ENCODE measurements at regions of chrX and their contacts with region 1.

Region 1: GRCh38 chrX:124010157-124010556 is 48.7 kb downstream of the STAG2 start:
- DNase-seq: no peak
- ATAC-seq: no peak
- H3K4me3 ChIP-seq: no peak overlapping the region
- H3K4me3 Mint-ChIP-seq: peak overlapping the region in 7 of 10 donors; percentile 0 to 69 (median 52)
- H3K27ac ChIP-seq: no peak overlapping the region
- H3K27ac Mint-ChIP-seq: peak overlapping the region in 6 of 9 donors; percentile 30 to 78 (median 66)
- H3K4me1 ChIP-seq: peaks cover 13 to 31% of the 10 kb centered on the region in 2 donors
- H3K4me1 Mint-ChIP-seq: peaks cover 27 to 85% (median 70%) of the 10 kb centered on the region in 7 donors
- H3K27me3 ChIP-seq: no peaks in the 10 kb centered on the region
- H3K27me3 Mint-ChIP-seq: no peaks in the 10 kb centered on the region

Region 2: GRCh38 chrX:123993904-123994635 is 16.1 kb before region 1 on chrX:
- CTCF ChIA-PET with region 1: no interaction called
- POLR2A ChIA-PET with region 1: no interaction called
- intact Hi-C with region 1: loop called in 1 of 2 experiments (anchors 2 kb)
- DNase-seq: no peak
- ATAC-seq: no peak
- H3K4me3 ChIP-seq: no peak overlapping the region
- H3K4me3 Mint-ChIP-seq: peak overlapping the region in 1 of 10 donors; percentile 18
- H3K27ac ChIP-seq: no peak overlapping the region
- H3K27ac Mint-ChIP-seq: peak overlapping the region in 3 of 9 donors; percentile 14 to 52 (median 51)
- H3K4me1 ChIP-seq: peaks cover 8 to 10% of the 10 kb centered on the region in 2 donors
- H3K4me1 Mint-ChIP-seq: peaks cover 5 to 73% (median 58%) of the 10 kb centered on the region in 7 donors
- H3K27me3 ChIP-seq: no peaks in the 10 kb centered on the region
- H3K27me3 Mint-ChIP-seq: no peaks in the 10 kb centered on the region